Activated CD4-positive, alpha-beta T cell treated with anti-CD3 and anti-CD28 coated beads, Interleukin-2, amount 10 ng/mL, durations not matched to agents 24 days and 14 days (primary cell): ENCODE measurements at regions of chr1 and their contacts with region 1.

Region 1: GRCh38 chr1:64242895-64243756 is 39.7 kb downstream of the UBE2U start:
- DNase-seq: no peak
- H3K4me3 Mint-ChIP-seq: peak overlapping the region; percentile 16
- H3K27ac Mint-ChIP-seq: no peak overlapping the region
- H3K4me1 Mint-ChIP-seq: peaks cover 10% of the 10 kb centered on the region
- H3K27me3 Mint-ChIP-seq: peaks cover 13% of the 10 kb centered on the region

Region 2: DNA sequence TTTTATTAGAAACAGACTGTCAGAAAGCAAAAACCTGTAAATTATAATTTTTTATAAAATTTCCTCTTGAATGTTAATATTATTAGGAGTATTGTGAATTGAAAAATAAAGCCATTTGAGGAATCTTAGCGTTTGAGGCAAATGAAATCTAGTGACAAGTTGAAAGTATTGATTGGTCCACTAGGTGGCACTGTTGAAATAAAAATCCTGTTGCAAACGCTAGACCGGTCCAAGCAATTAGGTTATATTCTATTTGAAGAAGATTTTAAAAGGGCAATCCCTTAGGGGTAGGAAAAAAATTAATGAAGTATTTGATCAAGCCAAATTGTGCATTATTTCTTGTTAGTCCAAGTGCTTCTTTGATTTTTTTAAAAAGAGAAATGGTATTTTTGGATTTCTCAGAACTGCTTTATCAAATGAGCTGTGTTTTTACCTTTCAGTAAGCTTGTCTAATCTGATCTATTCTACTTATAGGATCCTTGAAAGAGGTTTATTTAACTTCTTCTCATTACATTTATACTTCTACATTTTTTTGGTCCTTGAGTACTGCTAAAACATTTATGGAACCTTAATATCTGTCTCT is 1401.4 kb before region 1 on chr1:
- intact Hi-C with region 1: loop called (anchors 10 kb)
- DNase-seq: peak; percentile 76
- H3K4me3 Mint-ChIP-seq: no peak overlapping the region
- H3K27ac Mint-ChIP-seq: no peak overlapping the region
- H3K4me1 Mint-ChIP-seq: no peaks in the 10 kb centered on the region
- H3K27me3 Mint-ChIP-seq: no peaks in the 10 kb centered on the region

Region 3: GRCh38 chr1:63575340-63575826 is 667.7 kb before region 1 on chr1:
- intact Hi-C with region 1: loop called (anchors 5 kb)
- DNase-seq: peak; percentile 57
- H3K4me3 Mint-ChIP-seq: no peak overlapping the region
- H3K27ac Mint-ChIP-seq: no peak overlapping the region
- H3K4me1 Mint-ChIP-seq: no peaks in the 10 kb centered on the region
- H3K27me3 Mint-ChIP-seq: no peaks in the 10 kb centered on the region

Region 4: GRCh38 chr1:63615768-63616420 is 627.2 kb before region 1 on chr1:
- intact Hi-C with region 1: loop called (anchors 1 kb)
- DNase-seq: peak; percentile 92
- H3K4me3 Mint-ChIP-seq: no peak overlapping the region
- H3K27ac Mint-ChIP-seq: no peak overlapping the region
- H3K4me1 Mint-ChIP-seq: peaks cover 7% of the 10 kb centered on the region
- H3K27me3 Mint-ChIP-seq: no peaks in the 10 kb centered on the region

Region 5: DNA sequence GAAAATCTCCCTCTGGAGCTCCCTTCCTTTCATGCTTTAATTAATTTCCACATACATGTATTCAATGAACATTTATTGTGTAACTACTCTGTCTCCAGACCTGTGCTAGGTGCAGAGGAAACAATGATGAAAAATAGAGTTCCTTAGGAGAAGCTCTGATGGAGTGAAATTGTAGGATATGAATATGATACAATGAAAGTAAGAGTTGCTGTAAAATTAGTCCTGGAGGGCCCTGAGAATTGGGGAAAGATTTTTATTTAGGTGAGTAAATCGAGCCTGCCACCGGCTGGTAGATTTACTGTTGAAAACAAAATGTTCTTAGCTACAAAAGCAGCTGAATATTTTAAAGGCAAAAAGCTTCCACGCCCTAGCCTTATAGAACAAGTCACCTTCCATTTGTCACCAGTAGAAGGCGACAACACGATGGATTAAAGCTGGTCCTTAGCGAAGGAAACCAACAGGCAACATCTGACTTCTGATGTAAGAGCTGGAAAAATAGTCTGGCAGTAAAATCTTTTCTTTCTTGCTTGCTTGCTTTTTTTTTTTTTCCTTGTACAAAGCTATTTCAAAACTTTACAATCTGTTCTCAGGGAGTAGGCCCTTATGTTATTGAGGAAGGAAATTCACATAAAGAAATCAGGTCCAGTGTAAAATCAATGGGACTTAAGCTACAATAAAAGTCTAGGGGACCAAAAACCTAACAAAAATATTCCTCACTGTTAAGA is 551.3 kb before region 1 on chr1:
- intact Hi-C with region 1: loop called (anchors 2 kb)
- DNase-seq: peak; percentile 81
- H3K4me3 Mint-ChIP-seq: no peak overlapping the region
- H3K27ac Mint-ChIP-seq: no peak overlapping the region
- H3K4me1 Mint-ChIP-seq: peaks cover 1% of the 10 kb centered on the region
- H3K27me3 Mint-ChIP-seq: peaks cover 2% of the 10 kb centered on the region

Region 6: DNA sequence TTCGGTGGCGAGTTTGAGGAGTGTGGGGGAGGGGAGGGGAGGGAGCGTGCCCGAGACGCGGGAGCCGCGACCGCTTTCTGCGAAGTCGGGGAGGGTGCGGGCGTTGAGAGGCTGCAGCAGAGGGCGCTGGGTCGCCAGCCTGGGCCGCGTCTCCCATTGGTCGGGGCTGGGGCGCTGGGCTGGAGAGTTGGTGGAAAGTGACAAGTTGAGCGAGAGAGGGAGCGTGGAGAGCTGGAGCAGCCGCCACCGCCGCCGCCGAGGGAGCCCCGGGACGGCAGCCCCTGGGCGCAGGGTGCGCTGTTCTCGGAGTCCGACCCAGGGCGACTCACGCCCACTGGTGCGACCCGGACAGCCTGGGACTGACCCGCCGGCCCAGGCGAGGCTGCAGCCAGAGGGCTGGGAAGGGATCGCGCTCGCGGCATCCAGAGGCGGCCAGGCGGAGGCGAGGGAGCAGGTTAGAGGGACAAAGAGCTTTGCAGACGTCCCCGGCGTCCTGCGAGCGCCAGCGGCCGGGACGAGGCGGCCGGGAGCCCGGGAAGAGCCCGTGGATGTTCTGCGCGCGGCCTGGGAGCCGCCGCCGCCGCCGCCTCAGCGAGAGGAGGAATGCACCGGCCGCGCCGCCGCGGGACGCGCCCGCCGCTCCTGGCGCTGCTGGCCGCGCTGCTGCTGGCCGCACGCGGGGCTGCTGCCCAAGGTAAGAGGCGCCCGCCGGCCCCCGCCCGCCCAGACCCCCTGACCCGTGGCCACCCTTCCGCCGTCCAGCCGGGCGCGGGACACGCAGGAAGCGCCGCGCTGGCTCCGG is 469.1 kb before region 1 on chr1 and contains the start of gene ROR1:
- intact Hi-C with region 1: loop called (anchors 5 kb)
- DNase-seq: peak; percentile 87
- H3K4me3 Mint-ChIP-seq: peak within 1 kb of the TSS; percentile 88
- H3K27ac Mint-ChIP-seq: no peak within 1 kb of the TSS
- H3K4me1 Mint-ChIP-seq: peaks cover 12% of the 10 kb centered on the region
- H3K27me3 Mint-ChIP-seq: peaks cover 68% of the 10 kb centered on the region
- total RNA-seq, gene ROR1: 0.09 TPM in 1 of 2 replicates, not detected in the other

Region 7: GRCh38 chr1:64136752-64137411 is 106.2 kb before region 1 on chr1:
- intact Hi-C with region 1: loop called (anchors 1 kb)
- DNase-seq: peak; percentile 90
- H3K4me3 Mint-ChIP-seq: no peak overlapping the region
- H3K27ac Mint-ChIP-seq: no peak overlapping the region
- H3K4me1 Mint-ChIP-seq: no peaks in the 10 kb centered on the region
- H3K27me3 Mint-ChIP-seq: peaks cover 3% of the 10 kb centered on the region